H1 (cell line): ENCODE measurements at regions of chr13 and their contacts with region 1.

Region 1: GRCh38 chr13:23696610-23697009 is 126.4 kb downstream of the TNFRSF19 start:
- DNase-seq: no peak
- H3K4me3 ChIP-seq: no peak overlapping the region
- H3K27ac ChIP-seq: no peak overlapping the region
- H3K4me1 ChIP-seq: peaks cover 4 to 11% (median 7%) of the 10 kb centered on the region in 4 experiments
- H3K27me3 ChIP-seq: no peaks in the 10 kb centered on the region
- CTCF ChIP-seq: no peak
- EP300 ChIP-seq: no peak
- POLR2A ChIP-seq: no peak
- RAD21 ChIP-seq: no peak

Region 2: GRCh38 chr13:23707674-23708073 is 11.1 kb after region 1 on chr13:
- CTCF ChIA-PET with region 1: interaction called, 12 read pairs
- POLR2A ChIA-PET with region 1: no interaction called
- DNase-seq: no peak
- H3K4me3 ChIP-seq: no peak overlapping the region
- H3K27ac ChIP-seq: no peak overlapping the region
- H3K4me1 ChIP-seq: peaks cover 0 to 2% (median 0%) of the 10 kb centered on the region in 4 experiments; a peak in 1 of 7 replicates
- H3K27me3 ChIP-seq: no peaks in the 10 kb centered on the region
- CTCF ChIP-seq: peak in 1 of 3 experiments; percentile 17; a peak in 1 of 4 replicates
- EP300 ChIP-seq: no peak
- POLR2A ChIP-seq: no peak
- RAD21 ChIP-seq: peak in 1 of 2 experiments; percentile 23; a peak in 1 of 4 replicates